GM13976 (cell line): ENCODE measurements at regions of chr11 and their contacts with region 1.

Region 1: DNA sequence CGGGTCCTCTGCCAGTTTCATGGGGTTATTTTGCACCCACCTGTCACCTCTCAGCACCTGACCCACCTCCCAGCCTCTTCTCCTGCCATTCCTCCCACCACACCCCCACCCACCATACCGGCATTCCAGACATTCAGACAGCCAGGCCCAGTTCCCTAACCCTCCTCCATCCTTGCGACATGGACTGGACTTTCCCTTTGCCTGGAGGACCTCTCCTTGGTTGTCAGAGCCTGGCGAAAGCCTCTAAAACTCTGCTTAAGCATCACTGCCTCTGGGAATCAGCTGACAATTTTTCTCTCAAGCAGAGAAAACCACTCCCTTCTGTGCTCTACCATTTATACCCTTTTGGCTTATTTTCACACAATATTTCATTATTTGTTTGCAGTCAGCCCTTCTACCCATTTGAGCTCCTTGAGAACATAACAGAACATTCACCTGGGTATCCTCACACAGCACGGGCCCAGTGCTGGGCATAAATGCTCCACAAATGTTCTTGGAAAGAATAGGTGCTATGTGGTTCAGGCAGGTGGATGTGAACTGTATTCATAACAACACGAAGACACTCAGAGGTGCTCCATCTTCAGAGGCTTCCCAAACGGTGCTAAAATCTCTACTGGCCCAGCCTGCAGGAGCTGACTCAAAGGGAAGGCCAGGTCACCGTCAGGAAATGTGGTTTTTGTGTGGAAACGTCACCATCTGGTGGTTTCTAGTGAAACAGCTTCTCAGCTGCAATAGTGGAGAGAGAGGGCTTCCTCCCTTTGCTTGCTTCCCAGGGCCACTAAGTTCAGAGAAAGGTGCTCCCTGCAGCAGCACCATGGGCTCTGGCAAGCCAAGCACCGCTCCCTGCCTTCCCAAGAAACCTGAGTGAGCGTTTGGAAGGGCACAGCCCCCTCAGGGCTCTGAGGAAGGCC is 10.4 kb downstream of the SPATA19 start:
- DNase-seq: peak; percentile 75
- CTCF ChIP-seq: peak; percentile 62

Region 2: DNA sequence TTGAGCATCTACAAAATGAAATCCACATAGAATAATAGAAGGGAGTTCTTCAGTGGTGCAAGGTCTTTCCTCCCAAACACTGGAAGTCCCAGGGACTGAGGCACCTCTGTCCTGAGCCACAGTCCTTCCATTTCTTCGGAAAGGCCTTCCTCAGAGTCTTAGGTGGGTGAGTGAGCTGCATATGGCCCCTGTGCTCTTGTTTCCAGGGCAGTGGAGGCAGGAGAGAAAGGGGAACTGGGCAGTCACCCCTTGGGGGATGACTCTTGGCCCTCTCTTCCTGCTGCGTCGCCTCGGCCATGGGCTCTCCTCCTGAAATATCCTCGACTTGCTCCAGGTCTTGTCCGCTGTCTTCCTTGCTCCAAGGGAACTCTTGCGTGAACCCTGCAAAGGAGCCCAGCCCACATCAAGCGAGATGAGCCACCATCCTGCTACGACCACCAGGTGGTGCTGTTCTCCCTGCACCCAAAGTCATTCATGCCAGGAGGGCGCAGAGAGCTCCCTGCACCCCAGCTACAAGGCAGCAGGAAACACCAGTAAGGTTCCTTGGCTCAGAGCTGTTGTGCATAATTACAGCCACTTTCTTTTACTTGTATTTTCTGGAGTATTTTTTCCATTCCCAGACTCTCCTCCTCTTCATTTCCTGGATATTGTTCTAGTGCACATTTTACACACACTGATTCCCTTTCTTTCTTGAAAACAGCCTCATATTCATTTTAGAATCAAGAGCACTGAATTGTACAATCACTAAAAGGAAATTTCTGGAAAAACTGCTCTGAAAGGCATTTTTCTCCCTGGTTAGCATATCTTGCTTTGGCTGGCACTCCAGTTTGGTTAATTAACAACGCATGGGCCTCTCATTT is 700.4 kb before region 1 on chr11:
- in situ Hi-C with region 1: loop called (anchors 10 kb)
- DNase-seq: peak; percentile 59
- CTCF ChIP-seq: peak; percentile 87